ENCODE measurements at regions of chr17 and their contacts with region 1.

Region 1: GRCh38 chr17:15262291-15263205 is 2.6 kb downstream of the PMP22 start:
- DNase-seq: peak; percentile 89 to 90
- ATAC-seq: peak; percentile 82 to 92 (median 89)
- H3K4me3 ChIP-seq: peak overlapping the region; percentile 49 to 89 (median 80)
- H3K27ac ChIP-seq: peak overlapping the region; percentile 92 to 100 (median 98)
- H3K4me1 ChIP-seq: peaks cover 7 to 50% (median 41%) of the 10 kb centered on the region in 9 donors
- H3K27me3 ChIP-seq: peaks cover 0 to 45% (median 0%) of the 10 kb centered on the region in 7 donors
- CTCF ChIP-seq: peak in 6 of 9 donors; percentile 17 to 60 (median 36)

Region 2: DNA sequence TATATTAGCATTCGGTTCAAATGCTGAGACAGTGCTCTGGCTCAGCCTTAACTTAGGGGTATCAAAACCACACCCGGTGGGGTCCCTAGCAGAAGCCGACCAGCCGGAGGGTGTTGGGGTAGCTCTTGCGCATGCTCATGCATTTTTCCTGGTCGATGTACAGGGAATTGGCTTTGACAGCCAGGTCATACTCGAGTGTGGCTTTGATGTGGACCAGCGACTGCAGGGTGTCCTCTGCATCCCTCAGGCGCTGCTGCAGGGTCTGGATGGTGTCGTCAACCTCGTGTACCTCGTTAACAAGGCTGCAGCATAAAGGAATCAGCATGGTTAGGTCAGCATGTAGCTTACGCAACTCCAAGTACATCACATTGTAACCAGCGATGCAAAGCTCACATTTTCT is 41.3 kb after region 1 on chr17:
- intact Hi-C with region 1: loop called in 1 of 10 experiments (anchors 5 kb)
- DNase-seq: no peak
- ATAC-seq: no peak
- H3K4me3 ChIP-seq: no peak overlapping the region
- H3K27ac ChIP-seq: no peak overlapping the region
- H3K4me1 ChIP-seq: peaks cover 0 to 6% (median 4%) of the 10 kb centered on the region in 9 donors
- H3K27me3 ChIP-seq: no peaks in the 10 kb centered on the region
- CTCF ChIP-seq: no peak

Region 3: DNA sequence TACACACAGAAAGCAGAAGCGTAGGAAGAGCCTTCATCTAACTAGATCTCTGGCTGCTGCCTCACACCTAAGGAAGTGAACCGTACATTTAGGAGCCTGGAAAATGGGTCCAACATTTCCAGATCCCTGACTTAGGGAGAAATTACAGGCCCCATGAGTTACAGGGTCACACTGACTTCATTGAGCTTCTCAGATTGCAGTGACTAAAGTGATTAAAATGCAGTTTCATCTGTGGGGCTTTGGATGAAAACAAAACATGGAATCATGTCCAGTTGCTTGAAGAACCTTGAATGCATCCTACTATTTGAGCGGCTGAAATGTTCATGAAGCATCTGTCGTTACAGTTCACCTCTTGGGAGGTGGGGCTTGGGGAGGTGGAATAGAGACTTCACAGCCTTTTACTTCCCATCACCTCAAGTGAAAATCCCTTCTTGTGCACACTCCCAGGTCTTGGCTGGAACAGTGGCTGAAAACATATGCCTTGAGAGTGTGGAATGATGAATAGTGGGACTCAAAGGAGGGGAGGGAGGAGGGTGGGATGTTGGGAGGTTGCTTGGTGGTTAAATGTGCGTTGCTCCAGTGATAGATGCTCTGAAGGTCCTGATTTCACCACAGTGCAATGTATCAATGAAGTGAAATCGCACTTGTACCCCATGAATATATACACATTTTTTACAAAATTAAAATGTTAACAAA is 59.2 kb after region 1 on chr17:
- intact Hi-C with region 1: no loop called
- DNase-seq: no peak
- ATAC-seq: no peak
- H3K4me3 ChIP-seq: no peak overlapping the region
- H3K27ac ChIP-seq: no peak overlapping the region
- H3K4me1 ChIP-seq: peaks cover 0 to 6% (median 0%) of the 10 kb centered on the region in 9 donors
- H3K27me3 ChIP-seq: no peaks in the 10 kb centered on the region
- CTCF ChIP-seq: no peak

Region 4: GRCh38 chr17:15335446-15335845 is 72.9 kb after region 1 on chr17:
- intact Hi-C with region 1: loop called in 4 of 10 experiments (anchors 5 kb)
- DNase-seq: no peak
- ATAC-seq: no peak
- H3K4me3 ChIP-seq: no peak overlapping the region
- H3K27ac ChIP-seq: no peak overlapping the region
- H3K4me1 ChIP-seq: no peaks in the 10 kb centered on the region
- H3K27me3 ChIP-seq: peaks cover 0 to 11% (median 0%) of the 10 kb centered on the region in 7 donors
- CTCF ChIP-seq: no peak

Region 5: GRCh38 chr17:15341385-15341849 is 78.9 kb after region 1 on chr17 and contains the start of gene TEKT3:
- intact Hi-C with region 1: loop called in 4 of 10 experiments (anchors 5 kb)
- DNase-seq: peak; percentile 84 to 88
- ATAC-seq: peak; percentile 100
- H3K4me3 ChIP-seq: peak within 1 kb of the TSS; percentile 29 to 68 (median 58)
- H3K27ac ChIP-seq: no peak within 1 kb of the TSS
- H3K4me1 ChIP-seq: peaks cover 0 to 13% (median 10%) of the 10 kb centered on the region in 9 donors
- H3K27me3 ChIP-seq: peaks cover 0 to 58% (median 11%) of the 10 kb centered on the region in 7 donors
- CTCF ChIP-seq: no peak
- total RNA-seq, gene TEKT3: 0.26 to 1.1 (median 0.68) TPM in 7 of 10 donors, not detected in the others

Region 6: DNA sequence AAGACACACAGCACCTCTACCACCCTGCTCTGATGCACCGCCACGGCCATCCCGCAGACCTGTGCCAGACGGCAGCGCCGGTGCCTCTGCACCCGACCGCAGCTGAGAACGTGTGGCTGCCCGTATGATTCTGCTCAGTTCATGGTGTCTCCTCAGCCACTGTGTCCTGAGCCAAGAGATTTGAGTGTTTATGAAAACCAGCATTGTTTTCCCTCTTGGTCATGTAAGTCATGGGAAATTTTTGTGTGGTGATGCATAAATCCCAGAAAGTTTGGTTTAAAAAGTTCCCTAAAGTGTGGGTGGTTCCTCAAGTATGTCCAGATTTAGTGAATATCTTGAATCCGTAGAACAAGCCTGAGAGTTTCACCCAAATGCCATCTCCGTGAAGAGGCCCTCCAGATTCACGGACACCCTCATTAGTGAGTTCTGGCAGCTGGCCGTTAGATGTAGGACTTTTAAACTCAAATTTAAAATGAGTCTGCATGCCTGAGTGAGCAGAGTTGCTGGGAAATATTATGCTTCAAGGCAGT is 147.2 kb after region 1 on chr17:
- intact Hi-C with region 1: loop called in 4 of 10 experiments (anchors 5 to 10 kb)
- DNase-seq: peak in 1 of 2 donors; percentile 37
- ATAC-seq: peak; percentile 59 to 76 (median 70)
- H3K4me3 ChIP-seq: peak overlapping the region in 4 of 10 donors; percentile 13 to 16 (median 14)
- H3K27ac ChIP-seq: peak overlapping the region; percentile 48 to 81 (median 74)
- H3K4me1 ChIP-seq: peaks cover 3 to 47% (median 20%) of the 10 kb centered on the region in 9 donors
- H3K27me3 ChIP-seq: no peaks in the 10 kb centered on the region
- CTCF ChIP-seq: no peak

Region 7: DNA sequence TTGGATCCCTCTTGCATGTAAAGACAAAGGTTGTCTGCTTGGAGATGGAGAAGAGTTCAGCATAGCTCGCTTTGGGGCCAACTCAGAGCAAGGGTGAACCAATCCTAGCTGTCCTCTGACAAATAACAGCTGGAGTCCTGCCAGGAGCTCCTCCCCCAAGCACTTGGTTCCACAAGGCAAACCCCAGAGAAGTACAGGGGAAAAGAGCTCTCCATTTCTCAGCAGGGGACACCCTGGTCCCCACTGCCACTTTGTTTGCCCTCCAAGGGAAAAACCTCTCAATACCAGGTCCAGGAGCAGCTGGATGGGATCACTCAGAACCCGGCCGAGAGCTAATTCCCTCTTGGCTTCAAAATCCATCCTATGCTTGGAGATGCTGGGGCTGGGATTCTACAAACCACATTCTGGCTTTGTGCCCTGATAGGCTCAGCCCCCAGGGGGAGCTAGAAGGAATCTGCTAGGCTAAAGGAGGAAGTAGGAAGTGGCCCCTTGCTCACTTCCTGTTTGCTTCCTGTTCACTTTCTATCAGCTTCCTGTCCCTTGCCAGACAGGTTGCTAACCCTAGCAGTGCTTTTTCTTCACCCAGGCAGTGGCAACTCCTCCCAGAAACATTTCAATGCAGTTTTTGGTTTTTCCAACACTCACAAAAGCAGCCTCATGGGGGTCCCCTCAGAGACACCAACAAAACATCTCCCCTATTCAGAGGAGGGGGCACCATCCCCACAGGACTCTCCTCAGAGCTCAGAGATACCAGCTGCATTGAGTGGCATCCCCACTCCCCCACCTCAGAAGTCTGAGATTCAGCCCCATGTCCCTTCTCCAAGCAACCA is 174.1 kb after region 1 on chr17:
- intact Hi-C with region 1: loop called in 4 of 10 experiments (anchors 1 to 5 kb)
- DNase-seq: peak; percentile 64 to 75
- ATAC-seq: peak; percentile 37 to 75 (median 64)
- H3K4me3 ChIP-seq: no peak overlapping the region
- H3K27ac ChIP-seq: peak overlapping the region; percentile 51 to 88 (median 76)
- H3K4me1 ChIP-seq: peaks cover 13 to 51% (median 41%) of the 10 kb centered on the region in 9 donors
- H3K27me3 ChIP-seq: no peaks in the 10 kb centered on the region
- CTCF ChIP-seq: peak in 8 of 9 donors; percentile 9 to 58 (median 44)